Activated T-helper 2 cell treated with anti-CD3 and anti-CD28 coated beads, Interferon-gamma antibody, Interleukin-2, Interleukin-4, amounts not matched to agents 10 μg/mL and 5 μg/mL and 100 μg/mL, durations not matched to agents 14 hours and 24 hours and 36 hours (primary cell): ENCODE measurements at regions of chr22 and their contacts with region 1.

Region 1: GRCh38 chr22:27004434-27004833 is 347.0 kb downstream of the MIAT start:
- DNase-seq: no peak
- H3K4me3 Mint-ChIP-seq: no peak overlapping the region
- H3K27ac Mint-ChIP-seq: no peak overlapping the region
- H3K4me1 Mint-ChIP-seq: no peaks in the 10 kb centered on the region
- H3K27me3 Mint-ChIP-seq: no peaks in the 10 kb centered on the region

Region 2: GRCh38 chr22:26949193-26949592 is 55.2 kb before region 1 on chr22:
- intact Hi-C with region 1: loop called (anchors 10 kb)
- DNase-seq: no peak
- H3K4me3 Mint-ChIP-seq: no peak overlapping the region
- H3K27ac Mint-ChIP-seq: no peak overlapping the region
- H3K4me1 Mint-ChIP-seq: no peaks in the 10 kb centered on the region
- H3K27me3 Mint-ChIP-seq: peaks cover 25% of the 10 kb centered on the region